ENCODE measurements at regions of chrX and their contacts with region 1.

Region 1: DNA sequence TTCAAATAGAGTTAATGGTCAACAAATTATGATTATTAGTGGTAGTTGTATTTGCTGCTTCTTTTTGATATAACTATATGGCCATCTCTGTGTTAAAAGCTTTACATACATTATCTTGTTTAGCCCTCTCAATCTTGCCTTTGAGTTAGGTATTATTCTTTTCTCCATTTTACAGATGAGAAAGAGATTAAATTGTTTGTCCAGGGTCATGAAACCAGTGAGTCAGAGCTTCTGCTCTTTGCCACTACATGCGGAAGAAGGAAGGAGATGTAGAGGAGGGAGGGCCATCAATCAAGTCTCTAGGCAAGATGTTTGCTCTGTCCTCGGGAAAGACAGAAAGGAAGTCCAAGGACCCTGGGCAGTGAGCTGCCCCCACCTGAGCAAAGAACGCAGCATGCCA is 133.7 kb upstream of the IL1RAPL2 start:
- DNase-seq: peak; percentile 50 to 92
- H3K4me3 ChIP-seq: no peak overlapping the region
- H3K27ac ChIP-seq: peak overlapping the region; percentile 85
- H3K4me1 ChIP-seq: peaks cover 39% of the 10 kb centered on the region
- H3K27me3 ChIP-seq: no peaks in the 10 kb centered on the region
- CTCF ChIP-seq: no peak

Region 2: GRCh38 chrX:104318330-104319009 is 113.8 kb before region 1 on chrX:
- CTCF ChIA-PET with region 1: no interaction called
- POLR2A ChIA-PET with region 1: no interaction called
- intact Hi-C with region 1: loop called (anchors 5 kb)
- DNase-seq: peak; percentile 53 to 98
- H3K4me3 ChIP-seq: peak overlapping the region; percentile 45
- H3K27ac ChIP-seq: peak overlapping the region; percentile 99
- H3K4me1 ChIP-seq: peaks cover 81% of the 10 kb centered on the region
- H3K27me3 ChIP-seq: no peaks in the 10 kb centered on the region
- CTCF ChIP-seq: no peak; the same call in 1 of the 2 replicates

Region 3: DNA sequence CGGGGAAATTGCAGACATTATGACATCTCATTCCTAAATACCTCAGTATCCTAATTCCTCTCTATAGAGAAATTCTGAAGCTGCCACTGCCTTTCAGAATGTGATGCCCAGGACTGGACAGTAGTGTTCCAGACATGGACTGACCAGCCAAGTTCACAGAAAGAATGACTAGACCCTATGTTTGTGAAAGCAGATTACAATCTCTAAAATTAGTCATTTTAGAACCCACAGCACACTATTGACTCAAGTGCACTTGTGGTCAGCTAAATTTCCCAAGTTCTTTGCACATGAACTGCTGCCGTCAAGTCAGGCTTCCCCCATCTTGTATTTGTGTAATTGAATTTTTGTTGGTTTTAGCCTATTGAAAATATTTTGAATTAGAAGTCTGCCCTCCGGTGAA is 96.5 kb before region 1 on chrX:
- CTCF ChIA-PET with region 1: no interaction called
- POLR2A ChIA-PET with region 1: no interaction called
- intact Hi-C with region 1: loop called (anchors 5 kb)
- DNase-seq: peak; percentile 21 to 92
- H3K4me3 ChIP-seq: no peak overlapping the region
- H3K27ac ChIP-seq: peak overlapping the region; percentile 90
- H3K4me1 ChIP-seq: peaks cover 66% of the 10 kb centered on the region
- H3K27me3 ChIP-seq: no peaks in the 10 kb centered on the region
- CTCF ChIP-seq: no peak

Region 4: DNA sequence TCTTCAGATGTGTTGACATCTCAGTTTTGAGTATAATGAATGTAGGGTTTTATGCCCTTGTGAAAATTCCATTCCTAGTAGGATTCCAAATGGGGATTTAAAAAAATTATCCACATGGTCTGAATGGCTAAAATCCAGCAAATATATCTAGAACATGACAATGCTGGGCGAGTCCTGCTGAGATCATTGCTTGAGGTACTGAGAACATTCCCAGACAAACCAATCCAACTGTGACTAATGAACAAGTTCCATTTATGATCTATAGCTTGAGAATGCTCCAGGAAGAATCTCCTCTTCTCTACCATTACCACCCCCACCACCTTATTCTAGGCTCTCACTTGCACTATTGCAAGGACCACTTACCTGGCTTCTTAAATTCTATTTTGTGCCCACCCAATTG is 56.6 kb after region 1 on chrX:
- CTCF ChIA-PET with region 1: no interaction called
- POLR2A ChIA-PET with region 1: no interaction called
- intact Hi-C with region 1: no loop called
- DNase-seq: no peak
- H3K4me3 ChIP-seq: no peak overlapping the region
- H3K27ac ChIP-seq: no peak overlapping the region
- H3K4me1 ChIP-seq: no peaks in the 10 kb centered on the region
- H3K27me3 ChIP-seq: no peaks in the 10 kb centered on the region
- CTCF ChIP-seq: no peak

Region 5: GRCh38 chrX:104806306-104806855 is 374.1 kb after region 1 on chrX:
- CTCF ChIA-PET with region 1: no interaction called
- POLR2A ChIA-PET with region 1: no interaction called
- intact Hi-C with region 1: loop called (anchors 5 kb)
- DNase-seq: peak; percentile 27 to 93
- H3K4me3 ChIP-seq: no peak overlapping the region
- H3K27ac ChIP-seq: peak overlapping the region; percentile 83
- H3K4me1 ChIP-seq: peaks cover 41% of the 10 kb centered on the region
- H3K27me3 ChIP-seq: no peaks in the 10 kb centered on the region
- CTCF ChIP-seq: no peak